Activated B cell treated with CpG ODN at 0.5 μM for 24 hours (primary cell): ENCODE measurements at regions of chr17 and their contacts with region 1.

Region 1: GRCh38 chr17:752002-752619 is at the start of gene GEMIN4:
- DNase-seq: peak; percentile 100
- ATAC-seq: peak; percentile 90
- H3K4me3 Mint-ChIP-seq: peak within 1 kb of the TSS; percentile 91
- H3K27ac Mint-ChIP-seq: peak within 1 kb of the TSS; percentile 94
- H3K4me1 Mint-ChIP-seq: peaks cover 31% of the 10 kb centered on the region
- H3K27me3 Mint-ChIP-seq: no peaks in the 10 kb centered on the region
- CTCF ChIP-seq: no peak
- total RNA-seq, gene GEMIN4: 30.5 and 33.3 TPM in 2 replicates

Region 2: DNA sequence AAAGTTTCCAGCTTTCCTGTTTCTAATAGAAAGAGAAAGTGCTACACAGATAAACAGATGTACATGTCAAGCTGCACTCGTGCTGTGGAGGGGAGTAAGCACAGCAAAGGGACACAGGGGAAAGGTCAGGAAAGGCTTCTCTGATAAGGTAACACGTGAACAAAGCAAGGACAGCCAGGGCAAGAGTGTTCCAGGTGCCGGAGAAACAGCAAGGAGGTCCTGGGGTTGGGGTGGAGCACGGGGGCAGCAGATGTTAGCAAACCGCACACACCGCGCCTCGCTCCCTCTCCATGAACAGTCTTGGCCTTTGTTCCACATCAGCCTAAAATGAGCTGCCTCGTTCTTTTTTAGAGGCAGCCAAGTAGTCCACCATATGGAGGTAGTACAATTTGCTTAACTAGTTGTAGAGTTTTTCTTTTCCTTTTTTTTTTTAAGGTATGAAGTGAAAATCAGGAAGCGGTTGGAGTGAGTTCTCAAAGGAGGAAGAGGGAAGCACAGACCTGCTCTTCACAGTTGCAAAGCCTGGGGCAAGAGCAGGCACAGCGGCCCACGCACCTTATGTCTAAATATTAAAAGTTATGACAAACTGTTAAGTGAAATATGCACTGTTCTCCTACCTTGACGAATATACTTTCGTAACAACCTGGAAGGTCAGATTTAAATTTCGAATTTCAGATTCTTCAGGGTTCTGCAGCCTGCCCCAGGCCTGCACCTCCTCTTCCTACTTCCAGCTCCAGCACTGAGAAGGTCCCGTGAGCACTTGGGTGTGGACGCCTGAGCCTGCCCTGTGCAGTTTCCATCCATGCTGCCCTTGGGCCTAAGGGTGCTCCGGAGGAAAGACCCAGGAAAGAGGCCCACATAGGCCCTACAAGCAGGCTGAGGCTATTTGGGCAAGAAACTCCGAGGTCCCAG is 358.0 kb before region 1 on chr17:
- CTCF ChIA-PET with region 1: no interaction called
- POLR2A ChIA-PET with region 1: no interaction called
- intact Hi-C with region 1: no loop called
- DNase-seq: no peak
- ATAC-seq: no peak
- H3K4me3 Mint-ChIP-seq: no peak overlapping the region
- H3K27ac Mint-ChIP-seq: no peak overlapping the region
- H3K4me1 Mint-ChIP-seq: no peaks in the 10 kb centered on the region
- H3K27me3 Mint-ChIP-seq: peaks cover 5% of the 10 kb centered on the region
- CTCF ChIP-seq: no peak

Region 3: GRCh38 chr17:700504-701094 is 51.5 kb before region 1 on chr17:
- CTCF ChIA-PET with region 1: interaction called, 3 read pairs
- POLR2A ChIA-PET with region 1: no interaction called
- intact Hi-C with region 1: loop called (anchors 1 kb)
- DNase-seq: no peak
- ATAC-seq: no peak
- H3K4me3 Mint-ChIP-seq: no peak overlapping the region
- H3K27ac Mint-ChIP-seq: no peak overlapping the region
- H3K4me1 Mint-ChIP-seq: no peaks in the 10 kb centered on the region
- H3K27me3 Mint-ChIP-seq: no peaks in the 10 kb centered on the region
- CTCF ChIP-seq: peak; percentile 61

Region 4: DNA sequence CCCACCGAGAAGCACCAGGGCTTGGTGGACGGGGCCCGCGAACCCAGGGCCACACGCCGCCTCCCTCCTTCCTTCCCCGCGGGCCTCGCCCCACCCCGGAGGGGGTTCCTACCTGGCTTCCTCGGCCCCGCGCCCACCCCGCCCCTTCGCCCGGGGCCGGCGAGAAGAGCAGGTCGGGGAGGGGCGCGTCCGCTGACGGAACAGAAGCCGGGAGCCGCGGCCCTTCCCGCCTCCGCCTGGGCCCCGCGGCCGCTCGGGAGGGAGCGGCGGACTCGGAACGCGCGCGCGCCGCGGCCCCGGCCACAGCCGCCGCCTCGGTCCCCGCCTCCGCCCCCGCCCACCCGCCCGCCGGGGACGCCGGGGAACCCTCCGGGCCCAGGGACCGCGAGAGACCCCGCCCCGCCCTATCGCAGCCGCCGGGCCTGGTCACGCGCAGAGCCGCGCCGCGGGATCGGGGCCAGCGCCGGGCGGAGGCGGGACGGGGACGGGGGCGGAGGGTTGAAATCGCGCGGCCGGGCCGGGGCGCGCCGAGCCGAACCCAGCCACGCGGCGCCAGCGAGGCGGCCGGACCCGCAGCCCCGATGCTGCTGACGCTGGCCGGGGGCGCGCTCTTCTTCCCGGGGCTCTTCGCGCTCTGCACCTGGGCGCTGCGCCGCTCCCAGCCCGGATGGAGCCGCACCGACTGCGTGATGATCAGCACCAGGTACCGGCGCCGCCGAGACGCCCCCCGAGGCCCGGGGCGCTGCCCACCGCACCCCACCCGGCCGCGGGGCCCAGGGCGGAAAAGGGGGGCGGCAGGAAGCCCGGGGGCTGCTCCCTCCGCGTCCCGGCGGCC is 19.8 kb before region 1 on chr17 and contains the start of gene TLCD3A:
- CTCF ChIA-PET with region 1: interaction called, 4 read pairs
- POLR2A ChIA-PET with region 1: interaction called, 5 read pairs
- intact Hi-C with region 1: loop called (anchors 2 kb)
- DNase-seq: peak; percentile 50
- ATAC-seq: peak; percentile 63
- H3K4me3 Mint-ChIP-seq: peak within 1 kb of the TSS; percentile 87
- H3K27ac Mint-ChIP-seq: no peak within 1 kb of the TSS
- H3K4me1 Mint-ChIP-seq: peaks cover 6% of the 10 kb centered on the region
- H3K27me3 Mint-ChIP-seq: no peaks in the 10 kb centered on the region
- CTCF ChIP-seq: no peak
- total RNA-seq, gene TLCD3A: 2.8 and 3.1 TPM in 2 replicates

Region 5: DNA sequence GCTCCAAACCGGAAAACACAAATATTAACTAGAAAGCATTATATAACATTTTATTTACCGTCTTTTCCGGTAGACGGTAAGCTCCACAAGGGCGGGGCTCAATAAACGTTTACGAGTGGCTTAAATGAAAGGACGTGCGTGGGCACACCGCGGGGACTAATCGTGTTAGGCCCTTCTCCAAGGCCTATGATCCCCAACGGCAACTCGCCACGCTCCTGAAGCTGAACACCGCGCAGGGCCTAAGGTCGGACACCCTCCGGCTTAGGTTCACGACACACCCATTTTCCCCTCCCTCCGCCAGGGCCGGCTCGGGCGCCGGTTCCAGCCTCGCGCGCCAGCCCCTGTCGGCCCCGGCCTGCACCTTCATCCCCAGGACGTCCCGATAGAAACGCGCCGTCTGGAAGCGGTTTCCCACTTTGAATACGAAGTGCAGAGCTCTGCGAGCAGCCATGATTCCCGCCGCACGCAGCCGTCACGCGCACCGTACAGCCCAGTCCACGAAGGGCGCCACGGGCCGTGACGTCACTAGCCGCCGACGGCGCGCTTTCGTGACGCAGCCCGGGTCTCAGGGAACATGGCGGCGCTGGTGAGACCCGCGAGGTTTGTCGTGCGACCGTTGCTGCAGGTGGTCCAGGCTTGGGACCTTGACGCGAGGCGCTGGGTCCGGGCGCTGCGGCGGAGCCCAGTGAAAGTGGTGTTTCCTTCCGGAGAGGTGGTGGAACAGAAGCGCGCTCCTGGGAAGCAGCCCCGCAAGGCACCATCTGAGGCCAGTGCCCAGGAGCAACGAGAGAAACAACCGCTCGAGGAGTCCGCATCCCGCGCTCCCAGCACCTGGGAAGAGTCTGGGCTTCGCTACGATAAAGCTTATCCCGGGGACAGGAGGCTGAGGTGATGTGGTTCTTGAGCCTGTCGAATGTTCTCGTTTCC is 30.0 kb after region 1 on chr17 and contains the starts of genes GLOD4 and MRM3:
- CTCF ChIA-PET with region 1: interaction called, 3 read pairs
- POLR2A ChIA-PET with region 1: interaction called, 23 read pairs
- intact Hi-C with region 1: loop called (anchors 1 kb)
- DNase-seq: peak; percentile 99
- ATAC-seq: peak; percentile 96
- H3K4me3 Mint-ChIP-seq: peak within 1 kb of the TSS; percentile 98
- H3K27ac Mint-ChIP-seq: peak within 1 kb of the TSS; percentile 94
- H3K4me1 Mint-ChIP-seq: peaks cover 38% of the 10 kb centered on the region
- H3K27me3 Mint-ChIP-seq: no peaks in the 10 kb centered on the region
- CTCF ChIP-seq: no peak
- total RNA-seq, gene GLOD4: 51.4 and 51.9 TPM in 2 replicates
- total RNA-seq, gene MRM3: 23.3 and 26.3 TPM in 2 replicates

Region 6: DNA sequence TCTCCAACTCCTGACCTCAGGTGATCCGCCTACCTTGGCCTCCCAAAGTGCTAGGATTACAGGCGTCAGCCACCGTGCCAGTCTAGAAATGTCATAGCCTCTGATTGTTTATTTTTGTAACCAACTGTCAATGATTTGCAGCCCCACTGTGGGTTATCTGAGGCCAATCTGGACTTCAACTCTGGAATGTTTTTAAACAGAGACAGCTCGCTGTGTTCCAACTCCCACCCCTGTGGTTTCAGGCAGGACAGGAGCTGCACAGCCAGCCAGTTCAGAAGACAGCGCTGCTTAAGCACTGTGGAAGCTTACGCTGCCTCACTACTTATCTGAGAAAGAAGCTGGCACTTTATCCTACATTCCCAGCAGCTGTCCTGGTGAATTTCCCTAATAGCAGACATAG is 49.5 kb after region 1 on chr17:
- CTCF ChIA-PET with region 1: no interaction called
- POLR2A ChIA-PET with region 1: no interaction called
- intact Hi-C with region 1: no loop called
- DNase-seq: no peak
- ATAC-seq: no peak
- H3K4me3 Mint-ChIP-seq: no peak overlapping the region
- H3K27ac Mint-ChIP-seq: no peak overlapping the region
- H3K4me1 Mint-ChIP-seq: no peaks in the 10 kb centered on the region
- H3K27me3 Mint-ChIP-seq: no peaks in the 10 kb centered on the region
- CTCF ChIP-seq: no peak